ENCODE measurements at regions of chr6 and their contacts with region 1.

Region 1: DNA sequence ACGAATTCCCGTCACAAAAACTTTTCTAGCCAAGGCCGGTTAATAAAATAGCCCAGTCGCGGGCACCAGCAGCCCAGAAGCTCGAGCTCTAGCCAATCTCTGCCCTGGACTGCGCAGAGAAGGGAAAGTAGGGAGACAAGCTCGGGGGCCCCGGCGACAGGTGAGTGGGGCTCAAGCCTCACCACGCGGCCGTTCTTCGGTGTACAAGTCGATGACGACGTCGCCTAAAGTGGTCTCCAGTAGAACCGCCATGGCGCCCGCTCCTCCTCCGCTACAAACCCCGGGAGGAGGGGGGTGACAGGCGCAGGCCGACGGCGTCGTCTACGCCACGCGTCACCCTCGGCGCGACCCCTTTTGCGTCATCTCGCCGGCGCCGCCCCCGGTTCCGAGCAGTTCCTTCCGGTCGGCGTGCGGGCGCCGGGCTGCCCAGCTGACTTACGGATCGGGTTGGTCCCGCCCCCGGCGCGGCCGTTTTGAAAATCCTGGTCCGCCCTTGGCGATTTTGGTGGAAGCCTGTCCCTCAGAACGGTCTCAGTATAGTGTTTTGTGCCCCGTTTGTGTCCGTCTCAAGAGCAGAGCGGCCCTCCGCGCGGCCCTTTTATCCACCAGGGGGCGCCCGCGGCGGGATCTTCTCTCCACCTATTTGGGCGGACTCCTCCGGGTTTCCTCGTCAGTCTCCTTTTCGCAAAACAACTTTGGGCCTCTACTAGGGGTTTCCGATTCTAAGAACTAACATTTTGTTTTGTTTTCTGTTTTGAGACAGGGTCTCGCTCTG is at the start of gene PPIL4:
- DNase-seq: peak; percentile 94 to 98 (median 97)
- H3K4me3 ChIP-seq: peak within 1 kb of the TSS; percentile 68 to 74
- H3K4me3 Mint-ChIP-seq: peak within 1 kb of the TSS; percentile 97 to 100 (median 98)
- H3K27ac ChIP-seq: peak within 1 kb of the TSS; percentile 100
- H3K27ac Mint-ChIP-seq: peak within 1 kb of the TSS; percentile 98 to 100 (median 100)
- H3K4me1 ChIP-seq: peaks cover 32% of the 10 kb centered on the region
- H3K4me1 Mint-ChIP-seq: peaks cover 27 to 50% (median 38%) of the 10 kb centered on the region in 4 donors
- H3K27me3 ChIP-seq: no peaks in the 10 kb centered on the region
- H3K27me3 Mint-ChIP-seq: peaks cover 0 to 3% of the 10 kb centered on the region in 2 donors
- total RNA-seq, gene PPIL4: 33.1 to 35.7 TPM

Region 2: GRCh38 chr6:149271348-149272340 is 274.3 kb before region 1 on chr6:
- CTCF ChIA-PET with region 1: no interaction called
- POLR2A ChIA-PET with region 1: no interaction called
- intact Hi-C with region 1: no loop called
- DNase-seq: peak; percentile 13 to 50 (median 21)
- H3K4me3 ChIP-seq: peak overlapping the region in 1 of 2 donors; percentile 3
- H3K4me3 Mint-ChIP-seq: peak overlapping the region in 7 of 8 donors; percentile 57 to 79 (median 76)
- H3K27ac ChIP-seq: no peak overlapping the region
- H3K27ac Mint-ChIP-seq: peak overlapping the region; percentile 68 to 93 (median 87)
- H3K4me1 ChIP-seq: peaks cover 24% of the 10 kb centered on the region
- H3K4me1 Mint-ChIP-seq: peaks cover 23 to 41% (median 32%) of the 10 kb centered on the region in 4 donors
- H3K27me3 ChIP-seq: no peaks in the 10 kb centered on the region
- H3K27me3 Mint-ChIP-seq: no peaks in the 10 kb centered on the region

Region 3: GRCh38 chr6:149354009-149354408 is 191.9 kb before region 1 on chr6:
- CTCF ChIA-PET with region 1: no interaction called
- POLR2A ChIA-PET with region 1: no interaction called
- intact Hi-C with region 1: no loop called
- DNase-seq: no peak
- H3K4me3 ChIP-seq: no peak overlapping the region
- H3K4me3 Mint-ChIP-seq: peak overlapping the region in 3 of 8 donors; percentile 12 to 50 (median 33)
- H3K27ac ChIP-seq: no peak overlapping the region
- H3K27ac Mint-ChIP-seq: peak overlapping the region in 4 of 7 donors; percentile 31 to 79 (median 54)
- H3K4me1 ChIP-seq: peaks cover 90% of the 10 kb centered on the region
- H3K4me1 Mint-ChIP-seq: peaks cover 55 to 92% (median 75%) of the 10 kb centered on the region in 4 donors
- H3K27me3 ChIP-seq: no peaks in the 10 kb centered on the region
- H3K27me3 Mint-ChIP-seq: no peaks in the 10 kb centered on the region

Region 4: DNA sequence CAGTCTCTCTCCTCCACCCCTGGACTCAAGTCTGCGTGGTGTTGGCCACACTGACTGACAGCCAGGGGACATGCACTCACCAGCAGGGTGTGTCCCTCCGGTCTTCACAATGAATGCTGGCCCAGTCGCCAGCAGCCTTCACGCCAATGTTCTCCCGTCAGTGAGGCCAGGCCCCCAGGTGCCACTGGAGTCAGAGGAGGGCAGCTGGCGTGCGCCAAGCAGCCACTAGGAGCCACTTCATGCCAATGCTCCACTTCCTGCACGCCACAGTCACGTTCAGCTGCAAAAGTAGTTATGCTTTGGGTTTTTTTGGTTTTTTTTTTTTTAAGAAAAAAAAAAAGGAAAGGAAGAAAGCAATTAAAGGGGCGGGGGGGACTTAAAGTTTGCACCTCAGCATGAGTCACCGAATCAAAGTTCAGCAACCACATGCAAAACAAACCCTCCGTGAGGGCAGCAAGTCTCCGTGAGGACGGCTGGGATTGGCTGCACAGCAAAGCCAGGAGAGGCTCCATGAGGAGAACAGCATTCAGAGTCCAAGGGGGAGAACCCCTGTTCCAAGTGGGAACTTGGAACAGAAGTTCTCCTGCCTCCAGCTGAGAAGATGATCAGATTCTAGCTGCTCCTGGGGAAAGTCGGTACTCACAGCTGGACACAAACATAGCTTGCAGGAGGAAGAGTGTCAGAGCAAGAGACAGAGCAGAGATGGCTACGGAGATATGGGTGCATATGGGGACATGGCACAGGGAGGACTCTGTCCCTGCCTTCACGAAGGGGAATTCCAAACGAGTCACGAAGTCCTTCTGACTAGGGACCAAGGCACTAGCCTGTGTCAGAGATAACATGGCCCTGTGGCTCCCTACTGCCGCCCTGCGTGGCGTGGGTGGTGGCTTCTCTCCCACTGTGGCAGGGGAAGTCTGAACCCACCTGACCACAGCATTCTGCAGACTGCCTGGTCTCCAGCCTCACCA is 60.9 kb before region 1 on chr6 and contains the start of gene ZC3H12D:
- CTCF ChIA-PET with region 1: interaction called, 6 read pairs
- POLR2A ChIA-PET with region 1: interaction called, 5 read pairs
- intact Hi-C with region 1: loop called (anchors 2 kb)
- DNase-seq: peak; percentile 83 to 96 (median 89)
- H3K4me3 ChIP-seq: peak within 1 kb of the TSS; percentile 76 to 82
- H3K4me3 Mint-ChIP-seq: peak within 1 kb of the TSS; percentile 90 to 98 (median 94)
- H3K27ac ChIP-seq: peak within 1 kb of the TSS; percentile 99
- H3K27ac Mint-ChIP-seq: peak within 1 kb of the TSS; percentile 98 to 100 (median 100)
- H3K4me1 ChIP-seq: peaks cover 32% of the 10 kb centered on the region
- H3K4me1 Mint-ChIP-seq: peaks cover 25 to 69% (median 38%) of the 10 kb centered on the region in 4 donors
- H3K27me3 ChIP-seq: no peaks in the 10 kb centered on the region
- H3K27me3 Mint-ChIP-seq: no peaks in the 10 kb centered on the region
- total RNA-seq, gene ZC3H12D: 91.5 to 106 TPM

Region 5: GRCh38 chr6:149565527-149566409 is 19.8 kb after region 1 on chr6 and contains the start of gene GINM1:
- CTCF ChIA-PET with region 1: interaction called, 30 read pairs
- POLR2A ChIA-PET with region 1: interaction called, 31 read pairs
- intact Hi-C with region 1: loop called (anchors 1 kb)
- DNase-seq: peak; percentile 94 to 97 (median 96)
- H3K4me3 ChIP-seq: peak within 1 kb of the TSS; percentile 61 to 94
- H3K4me3 Mint-ChIP-seq: peak within 1 kb of the TSS; percentile 94 to 98 (median 96)
- H3K27ac ChIP-seq: peak within 1 kb of the TSS; percentile 93
- H3K27ac Mint-ChIP-seq: peak within 1 kb of the TSS; percentile 96 to 99 (median 98)
- H3K4me1 ChIP-seq: peaks cover 25% of the 10 kb centered on the region
- H3K4me1 Mint-ChIP-seq: peaks cover 8 to 29% (median 15%) of the 10 kb centered on the region in 4 donors
- H3K27me3 ChIP-seq: no peaks in the 10 kb centered on the region
- H3K27me3 Mint-ChIP-seq: peaks cover 0 to 1% of the 10 kb centered on the region in 2 donors
- total RNA-seq, gene GINM1: 17.1 to 18.5 TPM

Region 6: GRCh38 chr6:149717588-149718458 is 171.9 kb after region 1 on chr6 and contains the start of gene LATS1:
- CTCF ChIA-PET with region 1: interaction called, 4 read pairs
- POLR2A ChIA-PET with region 1: interaction called, 16 read pairs
- intact Hi-C with region 1: loop called (anchors 1 kb)
- DNase-seq: peak; percentile 90 to 93 (median 91)
- H3K4me3 ChIP-seq: peak within 1 kb of the TSS; percentile 82 to 95
- H3K4me3 Mint-ChIP-seq: peak within 1 kb of the TSS; percentile 89 to 98 (median 94)
- H3K27ac ChIP-seq: peak within 1 kb of the TSS; percentile 94
- H3K27ac Mint-ChIP-seq: peak within 1 kb of the TSS; percentile 95 to 99 (median 97)
- H3K4me1 ChIP-seq: peaks cover 43% of the 10 kb centered on the region
- H3K4me1 Mint-ChIP-seq: peaks cover 26 to 54% (median 39%) of the 10 kb centered on the region in 4 donors
- H3K27me3 ChIP-seq: no peaks in the 10 kb centered on the region
- H3K27me3 Mint-ChIP-seq: no peaks in the 10 kb centered on the region
- total RNA-seq, gene LATS1: 47.4 to 51.8 TPM

Region 7: GRCh38 chr6:149863697-149864577 is 318.0 kb after region 1 on chr6 and contains the start of gene LRP11:
- CTCF ChIA-PET with region 1: no interaction called
- POLR2A ChIA-PET with region 1: no interaction called
- intact Hi-C with region 1: loop called (anchors 1 kb)
- DNase-seq: peak; percentile 80 to 89 (median 85)
- H3K4me3 ChIP-seq: peak within 1 kb of the TSS; percentile 20 to 73
- H3K4me3 Mint-ChIP-seq: peak within 1 kb of the TSS; percentile 77 to 93 (median 84)
- H3K27ac ChIP-seq: peak within 1 kb of the TSS; percentile 29
- H3K27ac Mint-ChIP-seq: peak within 1 kb of the TSS; percentile 29 to 92 (median 79)
- H3K4me1 ChIP-seq: peaks cover 13% of the 10 kb centered on the region
- H3K4me1 Mint-ChIP-seq: peaks cover 3 to 23% (median 10%) of the 10 kb centered on the region in 4 donors
- H3K27me3 ChIP-seq: no peaks in the 10 kb centered on the region
- H3K27me3 Mint-ChIP-seq: peaks cover 0 to 5% of the 10 kb centered on the region in 2 donors
- total RNA-seq, gene LRP11: 3.6 to 5.6 TPM

Region 8: GRCh38 chr6:150004783-150005717 is 459.1 kb after region 1 on chr6:
- CTCF ChIA-PET with region 1: no interaction called
- POLR2A ChIA-PET with region 1: no interaction called
- intact Hi-C with region 1: loop called (anchors 5 kb)
- DNase-seq: peak; percentile 83 to 91 (median 85)
- H3K4me3 ChIP-seq: peak overlapping the region; percentile 50 to 93
- H3K4me3 Mint-ChIP-seq: peak overlapping the region; percentile 92 to 98 (median 95)
- H3K27ac ChIP-seq: peak overlapping the region; percentile 73
- H3K27ac Mint-ChIP-seq: peak overlapping the region; percentile 86 to 98 (median 96)
- H3K4me1 ChIP-seq: peaks cover 36% of the 10 kb centered on the region
- H3K4me1 Mint-ChIP-seq: peaks cover 15 to 52% (median 35%) of the 10 kb centered on the region in 4 donors
- H3K27me3 ChIP-seq: no peaks in the 10 kb centered on the region
- H3K27me3 Mint-ChIP-seq: peaks cover 10 to 15% of the 10 kb centered on the region in 2 donors